ACHN (cell line): ENCODE measurements at regions of chr2 and their contacts with region 1.

Region 1: GRCh38 chr2:15636972-15637785 is 45.5 kb downstream of the DDX1 start:
- DNase-seq: peak; percentile 77

Region 2: DNA sequence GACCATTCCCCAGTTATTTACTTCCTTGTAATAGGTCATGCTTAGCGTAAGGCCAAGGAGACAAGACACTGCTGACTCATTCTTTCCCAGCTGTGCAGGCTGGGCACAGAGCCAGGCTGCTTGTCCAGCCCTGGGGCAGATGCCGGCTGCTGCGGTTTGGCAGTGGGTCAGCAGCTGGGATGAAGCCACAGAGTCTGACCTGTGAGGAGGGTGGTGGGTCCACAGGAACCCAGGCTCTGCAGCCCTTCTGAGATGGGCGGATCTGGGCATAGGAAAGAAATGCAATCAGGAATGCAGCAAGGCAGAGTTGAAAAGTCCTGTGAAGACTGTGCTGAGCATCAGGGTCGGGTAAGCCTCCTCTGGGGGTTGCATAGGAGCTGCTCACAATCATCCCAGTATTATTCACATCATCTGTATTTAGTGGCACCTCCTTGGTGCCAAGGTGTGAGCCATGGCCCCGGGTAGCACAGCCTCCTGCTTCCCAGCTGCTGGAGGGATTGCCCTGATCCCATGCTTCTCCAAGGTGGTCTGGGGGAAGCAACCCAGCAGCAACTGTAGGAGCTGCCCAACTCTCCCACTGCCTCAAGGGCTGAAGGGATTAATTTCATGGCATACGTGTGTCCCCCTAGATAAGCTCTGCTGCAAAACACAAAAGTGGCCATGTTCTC is 93.5 kb after region 1 on chr2:
- in situ Hi-C with region 1: loop called (anchors 25 kb)
- DNase-seq: peak; percentile 97

Region 3: DNA sequence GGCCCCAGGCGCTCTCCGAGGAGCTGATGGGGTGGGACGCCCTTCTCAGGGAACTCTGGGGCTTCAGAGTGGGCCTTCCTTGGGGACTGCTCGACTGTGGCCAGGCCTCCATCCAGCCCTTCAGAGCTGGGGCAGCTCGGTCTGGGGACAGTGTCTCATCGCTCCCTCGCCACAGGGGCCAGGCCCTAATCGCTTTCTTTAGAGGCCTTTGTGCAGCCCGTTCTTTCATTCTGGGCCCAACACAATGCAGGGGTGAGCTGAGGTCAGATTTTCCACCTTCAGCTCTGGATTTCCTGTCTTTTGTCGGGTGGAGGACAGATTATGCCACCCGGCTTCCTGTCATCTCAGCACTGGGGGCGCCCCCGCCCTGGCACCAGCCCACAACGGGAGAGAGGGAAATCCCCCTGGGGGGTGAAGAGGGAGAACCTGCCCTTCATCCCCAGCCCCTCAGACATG is 328.4 kb after region 1 on chr2:
- in situ Hi-C with region 1: no loop called
- DNase-seq: no peak

Region 4: GRCh38 chr2:16014041-16014705 is 377.0 kb after region 1 on chr2:
- in situ Hi-C with region 1: no loop called
- DNase-seq: no peak